ENCODE measurements at regions of chr19 and their contacts with region 1.

Region 1: DNA sequence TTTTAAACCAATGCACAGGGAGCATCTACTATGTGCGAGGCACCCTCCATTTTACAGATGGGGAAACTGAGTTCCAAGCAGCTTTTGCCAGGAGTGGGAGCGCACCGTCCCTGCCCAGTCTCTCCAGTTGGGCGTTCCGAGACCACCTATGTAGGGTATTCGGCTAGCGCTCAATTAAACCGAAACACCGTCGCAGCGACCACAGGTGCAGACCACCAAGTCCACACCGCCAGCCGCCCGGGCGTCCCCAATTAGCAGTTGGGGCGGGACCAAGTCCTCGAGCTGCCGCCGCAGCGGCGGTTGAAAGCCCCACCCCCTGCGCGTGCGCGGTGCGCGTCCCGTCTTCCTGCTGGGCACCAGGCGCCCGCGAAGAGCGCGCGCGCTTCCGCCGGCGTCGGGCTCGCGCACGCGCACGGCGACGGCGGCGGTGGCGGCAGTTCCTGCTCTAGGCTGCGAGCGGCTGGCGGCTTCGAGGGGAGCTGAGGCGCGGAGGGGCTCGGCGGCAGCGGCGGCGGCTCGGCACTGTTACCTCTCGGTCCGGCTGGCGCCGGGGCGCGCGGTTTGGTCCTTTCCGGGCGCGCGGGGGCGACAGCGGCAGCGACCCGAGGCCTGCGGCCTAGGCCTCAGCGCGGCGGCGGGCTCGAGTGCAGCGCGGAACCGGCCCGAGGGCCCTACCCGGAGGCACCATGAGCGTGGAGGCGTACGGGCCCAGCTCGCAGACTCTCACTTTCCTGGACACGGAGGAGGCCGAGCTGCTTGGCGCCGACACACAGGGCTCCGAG is at the start of gene UPF1:
- DNase-seq: peak; percentile 95
- ATAC-seq: peak; percentile 93 to 96
- total RNA-seq, gene UPF1: 33.9 to 41.1 TPM

Region 2: GRCh38 chr19:18683213-18683939 is 148.3 kb before region 1 on chr19 and contains the start of gene CRTC1:
- intact Hi-C with region 1: loop called in 1 of 2 experiments (anchors 10 kb)
- DNase-seq: peak; percentile 90
- ATAC-seq: peak; percentile 87 to 95
- total RNA-seq, gene CRTC1: 10.5 to 11.1 TPM

Region 3: DNA sequence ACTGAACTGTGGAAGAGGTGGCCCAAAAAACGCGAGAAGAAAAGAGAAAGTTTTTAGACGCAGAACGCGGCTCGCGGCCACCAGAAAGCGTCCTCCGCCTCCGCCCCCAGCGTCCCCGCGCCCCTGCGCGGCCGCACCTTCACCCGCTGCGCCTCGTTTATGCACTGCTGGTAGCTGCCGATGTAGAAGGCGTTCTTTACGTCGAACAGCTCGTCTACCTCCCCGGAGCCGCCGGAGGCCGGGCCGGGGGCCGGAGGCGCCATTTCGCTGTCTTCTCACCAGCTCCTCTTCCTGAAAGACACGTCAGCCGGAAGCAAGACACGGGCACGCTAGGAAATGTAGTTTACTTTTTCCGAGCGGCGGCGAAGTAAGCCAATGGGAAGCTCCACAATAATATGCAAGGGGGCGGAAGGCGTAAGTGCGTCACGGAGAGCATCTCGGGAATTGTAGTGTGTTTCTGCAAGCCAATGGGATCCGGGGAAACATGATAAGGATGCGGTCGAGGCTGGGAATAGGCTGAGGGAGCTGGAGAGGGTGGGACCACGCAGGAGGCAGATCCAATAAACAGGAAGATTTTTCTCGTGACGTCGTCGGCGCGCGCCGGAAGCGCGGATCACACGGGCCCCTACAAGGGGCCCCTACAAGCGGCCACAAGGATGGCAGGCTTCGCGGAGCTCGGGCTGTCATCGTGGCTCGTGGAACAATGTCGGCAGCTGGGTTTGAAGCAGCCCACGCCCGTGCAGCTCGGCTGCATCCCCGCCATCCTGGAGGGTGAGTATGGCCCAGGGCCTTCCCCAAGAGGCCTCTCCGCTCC is 87.6 kb after region 1 on chr19 and contains the starts of genes COPE and DDX49:
- intact Hi-C with region 1: no loop called
- DNase-seq: peak; percentile 98
- ATAC-seq: peak; percentile 99
- total RNA-seq, gene COPE: 136 to 149 TPM
- total RNA-seq, gene DDX49: 23.6 to 24.2 TPM